GM12878 (cell line): ENCODE measurements at regions of chr22 and their contacts with region 1.

Region 1: GRCh38 chr22:44389926-44390602 is 77.3 kb upstream of the SHISAL1 start:
- DNase-seq: no peak
- ATAC-seq: no peak
- H3K4me3 ChIP-seq: no peak overlapping the region
- H3K27ac ChIP-seq: no peak overlapping the region
- H3K4me1 ChIP-seq: no peaks in the 10 kb centered on the region
- H3K27me3 ChIP-seq: peaks cover 0 to 3% of the 10 kb centered on the region in 2 experiments; a peak in 1 of 4 replicates
- CTCF ChIP-seq: no peak
- EP300 ChIP-seq: no peak
- POLR2A ChIP-seq: no peak
- RAD21 ChIP-seq: no peak

Region 2: GRCh38 chr22:44437221-44438055 is 47.4 kb after region 1 on chr22:
- CTCF ChIA-PET with region 1: no interaction called
- POLR2A ChIA-PET with region 1: no interaction called
- RAD21 ChIA-PET with region 1: no interaction called
- SMC1A ChIA-PET with region 1: no interaction called
- in situ Hi-C with region 1: loop called (anchors 5 kb)
- intact Hi-C with region 1: no loop called
- DNase-seq: no peak
- ATAC-seq: no peak
- H3K4me3 ChIP-seq: no peak overlapping the region
- H3K27ac ChIP-seq: no peak overlapping the region
- H3K4me1 ChIP-seq: no peaks in the 10 kb centered on the region
- H3K27me3 ChIP-seq: no peaks in the 10 kb centered on the region; a peak in 1 of 4 replicates
- CTCF ChIP-seq: no peak
- EP300 ChIP-seq: no peak
- POLR2A ChIP-seq: no peak
- RAD21 ChIP-seq: no peak